Activated B cell treated with CpG ODN at 0.5 μM for 24 hours (primary cell): ENCODE measurements at regions of chr12 and their contacts with region 1.

Region 1: DNA sequence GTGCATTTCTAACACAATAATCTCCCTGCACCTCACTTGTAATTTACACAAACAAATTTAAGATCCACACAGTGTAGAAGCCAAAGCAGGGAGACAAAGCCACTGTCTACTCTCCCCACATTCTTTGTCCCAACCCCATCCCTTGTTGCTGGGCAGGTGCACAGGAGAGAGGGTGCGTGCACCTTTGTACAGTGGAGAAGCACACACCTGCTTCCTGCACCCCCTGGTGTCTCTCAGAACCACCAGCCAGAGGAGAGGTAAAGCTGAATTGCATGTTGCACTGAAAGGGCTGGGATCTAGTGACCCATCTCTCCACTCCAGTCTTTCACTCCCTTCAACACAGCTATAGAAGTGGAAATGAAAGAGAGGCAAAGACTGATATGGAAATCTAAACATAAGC is 51.4 kb upstream of the IFNG-AS1 start:
- DNase-seq: no peak
- ATAC-seq: no peak
- H3K4me3 Mint-ChIP-seq: no peak overlapping the region
- H3K27ac Mint-ChIP-seq: no peak overlapping the region
- H3K4me1 Mint-ChIP-seq: no peaks in the 10 kb centered on the region
- H3K27me3 Mint-ChIP-seq: peaks cover 7% of the 10 kb centered on the region
- CTCF ChIP-seq: no peak

Region 2: DNA sequence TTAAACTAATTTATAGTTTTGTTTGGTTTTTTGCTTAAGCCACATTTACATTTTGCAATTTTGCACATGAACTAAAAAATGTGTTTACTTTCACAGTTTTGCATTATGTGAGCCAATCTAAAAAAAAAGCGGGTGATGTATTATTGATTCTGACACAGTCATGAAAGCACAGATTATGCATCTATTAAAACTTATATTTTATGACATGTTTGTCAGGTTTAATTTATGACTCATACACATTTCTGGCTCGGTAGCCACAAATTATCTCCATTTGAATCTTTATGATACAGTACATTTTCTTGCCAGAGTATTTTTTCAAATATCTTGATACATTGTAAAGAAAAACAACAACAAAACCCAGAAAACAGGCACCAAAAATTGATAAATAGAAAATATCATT is 978.6 kb before region 1 on chr12:
- CTCF ChIA-PET with region 1: no interaction called
- POLR2A ChIA-PET with region 1: no interaction called
- intact Hi-C with region 1: no loop called
- DNase-seq: no peak
- ATAC-seq: no peak
- H3K4me3 Mint-ChIP-seq: no peak overlapping the region
- H3K27ac Mint-ChIP-seq: no peak overlapping the region
- H3K4me1 Mint-ChIP-seq: no peaks in the 10 kb centered on the region
- H3K27me3 Mint-ChIP-seq: no peaks in the 10 kb centered on the region
- CTCF ChIP-seq: no peak

Region 3: DNA sequence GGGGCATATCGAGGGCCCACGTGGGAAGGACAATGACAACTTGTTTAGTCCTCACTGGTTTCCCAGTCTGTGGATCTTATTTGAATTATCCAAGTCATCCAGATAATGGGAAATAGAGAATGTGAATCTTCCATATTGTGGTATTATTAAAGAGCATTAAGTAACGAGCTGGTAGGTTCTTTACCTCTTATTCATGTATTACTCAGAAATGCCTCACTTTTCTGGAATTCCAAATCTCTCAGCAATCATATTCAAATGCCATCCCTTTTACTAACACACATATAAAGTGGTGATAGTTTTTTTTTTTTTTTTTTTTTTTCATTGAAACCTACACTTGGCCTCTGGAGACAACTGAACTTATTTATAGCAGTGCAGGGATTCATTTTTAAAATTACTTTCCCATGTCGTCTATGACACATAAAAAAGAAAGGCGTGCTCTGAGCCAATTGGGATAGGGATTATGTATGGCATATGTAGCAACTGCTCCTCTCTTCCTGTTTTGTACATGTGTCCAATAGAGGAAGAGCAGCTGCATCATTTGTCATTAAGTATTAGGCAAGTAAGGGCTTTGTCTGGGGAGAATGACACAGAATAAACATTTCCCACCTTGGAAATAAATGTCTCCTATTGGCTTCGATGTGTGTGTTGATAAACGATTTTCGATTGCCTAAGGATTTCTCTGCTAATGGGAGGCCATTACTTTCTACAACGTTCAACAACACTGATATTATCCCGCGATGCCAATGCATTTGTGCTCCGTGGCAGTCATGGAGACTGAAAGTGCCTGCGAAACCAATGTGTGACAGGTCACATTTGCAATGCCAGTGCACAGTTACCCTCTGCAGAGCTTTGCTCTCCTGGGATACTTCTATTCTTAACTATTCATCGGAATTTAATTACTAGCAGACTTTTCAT is 27.2 kb before region 1 on chr12:
- CTCF ChIA-PET with region 1: no interaction called
- POLR2A ChIA-PET with region 1: no interaction called
- intact Hi-C with region 1: loop called (anchors 1 kb)
- DNase-seq: no peak
- ATAC-seq: no peak
- H3K4me3 Mint-ChIP-seq: no peak overlapping the region
- H3K27ac Mint-ChIP-seq: no peak overlapping the region
- H3K4me1 Mint-ChIP-seq: no peaks in the 10 kb centered on the region
- H3K27me3 Mint-ChIP-seq: peaks cover 14% of the 10 kb centered on the region
- CTCF ChIP-seq: no peak

Region 4: DNA sequence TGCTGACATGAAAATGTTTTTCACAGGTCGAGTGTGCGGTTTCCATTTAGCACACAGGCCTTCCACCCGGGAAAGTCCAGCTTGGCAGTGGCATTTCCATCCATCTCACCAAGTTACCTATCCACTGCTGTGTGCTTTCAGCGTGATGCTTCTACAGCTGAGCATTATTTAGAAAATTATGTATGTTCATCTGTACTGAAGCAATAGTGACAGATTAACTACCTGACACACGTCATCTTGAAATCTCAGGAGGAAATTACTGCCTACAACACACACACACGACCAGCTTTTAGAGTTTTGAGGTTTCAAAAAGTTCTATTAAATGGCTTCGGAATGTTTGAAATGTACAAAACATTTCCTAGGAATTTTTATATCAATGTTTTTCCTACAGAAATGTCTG is 90.8 kb after region 1 on chr12:
- CTCF ChIA-PET with region 1: no interaction called
- POLR2A ChIA-PET with region 1: no interaction called
- intact Hi-C with region 1: no loop called
- DNase-seq: no peak
- ATAC-seq: no peak
- H3K4me3 Mint-ChIP-seq: no peak overlapping the region
- H3K27ac Mint-ChIP-seq: no peak overlapping the region
- H3K4me1 Mint-ChIP-seq: peaks cover 11% of the 10 kb centered on the region
- H3K27me3 Mint-ChIP-seq: no peaks in the 10 kb centered on the region
- CTCF ChIP-seq: no peak